ENCODE measurements at regions of chr18 and their contacts with region 1.

Region 1: GRCh38 chr18:55998071-55998522 is 410.1 kb upstream of the TCF4 start:
- DNase-seq: no peak
- H3K4me3 ChIP-seq: peak overlapping the region; percentile 40
- H3K27ac ChIP-seq: peak overlapping the region; percentile 65
- H3K4me1 ChIP-seq: peaks cover 22% of the 10 kb centered on the region
- H3K27me3 ChIP-seq: no peaks in the 10 kb centered on the region
- CTCF ChIP-seq: no peak

Region 2: DNA sequence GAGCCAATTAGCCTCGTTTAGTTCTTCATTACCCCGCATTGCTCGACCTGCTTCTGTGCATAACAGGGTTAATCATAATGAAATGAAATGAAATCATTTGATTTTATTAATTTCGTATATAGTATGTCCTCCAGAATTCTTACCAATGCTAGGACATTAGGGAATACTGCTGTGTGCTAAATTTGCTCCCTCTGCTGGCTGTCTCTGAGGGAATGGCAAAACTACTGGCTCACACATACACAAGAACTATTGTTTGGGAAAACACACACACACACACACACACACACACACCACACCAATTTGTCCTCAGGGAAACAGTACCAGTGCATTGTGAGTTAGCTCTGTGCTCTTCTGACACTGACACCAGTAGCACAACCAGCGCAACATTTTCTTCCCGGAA is 136.8 kb before region 1 on chr18:
- intact Hi-C with region 1: no loop called
- DNase-seq: no peak
- H3K4me3 ChIP-seq: no peak overlapping the region
- H3K27ac ChIP-seq: no peak overlapping the region
- H3K4me1 ChIP-seq: peaks cover 25% of the 10 kb centered on the region
- H3K27me3 ChIP-seq: no peaks in the 10 kb centered on the region
- CTCF ChIP-seq: peak; percentile 58

Region 3: DNA sequence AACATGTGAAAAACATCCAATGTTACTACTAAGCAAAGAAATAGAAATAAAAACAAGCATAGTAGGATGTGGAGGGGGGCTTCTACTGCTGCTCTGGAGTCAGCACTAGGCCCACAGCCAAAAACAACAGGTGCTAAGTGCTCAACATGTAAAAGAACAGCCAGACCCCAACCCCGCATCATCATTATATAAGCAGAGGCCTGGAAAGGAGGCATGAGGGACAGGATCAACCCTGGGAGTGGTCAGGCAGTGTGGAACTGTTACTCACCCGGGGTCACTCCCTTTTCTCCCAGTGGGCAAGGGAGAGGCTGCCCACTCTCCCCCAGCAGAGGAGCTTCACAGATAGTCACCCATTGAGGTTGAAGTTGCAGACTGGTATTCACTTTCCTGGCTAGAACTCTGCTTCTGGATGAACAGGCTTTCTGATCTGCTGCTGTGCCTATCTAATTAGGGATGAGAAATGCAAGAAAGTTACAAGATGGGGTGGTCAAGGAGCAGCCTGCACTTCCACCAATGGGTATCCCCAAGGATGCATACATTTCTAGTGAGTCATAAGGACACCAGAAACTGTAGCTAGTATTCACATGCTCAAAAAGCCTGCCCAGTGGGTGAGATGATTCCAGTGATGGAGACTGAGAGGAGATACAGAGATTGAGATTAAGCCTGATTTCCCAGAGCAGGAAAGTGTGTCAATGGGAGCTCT is 70.0 kb after region 1 on chr18:
- intact Hi-C with region 1: loop called (anchors 10 kb)
- DNase-seq: no peak
- H3K4me3 ChIP-seq: no peak overlapping the region
- H3K27ac ChIP-seq: peak overlapping the region; percentile 71
- H3K4me1 ChIP-seq: peaks cover 25% of the 10 kb centered on the region
- H3K27me3 ChIP-seq: no peaks in the 10 kb centered on the region
- CTCF ChIP-seq: no peak

Measured in left ventricle myocardium inferior (tissue), 1 donor.